ENCODE measurements at regions of chr7 and their contacts with region 1.

Region 1: GRCh38 chr7:26090927-26091519 is 61.0 kb upstream of the NFE2L3 start:
- DNase-seq: no peak
- H3K4me3 ChIP-seq: peak overlapping the region in 1 of 8 donors; percentile 21
- H3K27ac ChIP-seq: no peak overlapping the region
- H3K4me1 ChIP-seq: peaks cover 0 to 16% (median 8%) of the 10 kb centered on the region in 6 donors
- H3K27me3 ChIP-seq: no peaks in the 10 kb centered on the region
- CTCF ChIP-seq: peak; percentile 43 to 71 (median 61)
- POLR2A ChIP-seq: no peak

Region 2: GRCh38 chr7:26200444-26201246 is 109.6 kb after region 1 on chr7 and contains the start of gene HNRNPA2B1:
- intact Hi-C with region 1: loop called (anchors 10 kb)
- DNase-seq: peak; percentile 99
- H3K4me3 ChIP-seq: peak within 1 kb of the TSS; percentile 51 to 93 (median 89)
- H3K27ac ChIP-seq: peak within 1 kb of the TSS; percentile 99 to 100 (median 100)
- H3K4me1 ChIP-seq: peaks cover 43 to 69% (median 56%) of the 10 kb centered on the region in 6 donors
- H3K27me3 ChIP-seq: no peaks in the 10 kb centered on the region
- CTCF ChIP-seq: peak in 7 of 11 experiments; percentile 7 to 56 (median 51)
- POLR2A ChIP-seq: peak; percentile 100
- total RNA-seq, gene HNRNPA2B1: 267 to 549 (median 418) TPM

Region 3: GRCh38 chr7:26675143-26675887 is 584.3 kb after region 1 on chr7:
- intact Hi-C with region 1: loop called (anchors 10 kb)
- DNase-seq: no peak
- H3K4me3 ChIP-seq: no peak overlapping the region
- H3K27ac ChIP-seq: no peak overlapping the region
- H3K4me1 ChIP-seq: peaks cover 0 to 30% (median 0%) of the 10 kb centered on the region in 6 donors
- H3K27me3 ChIP-seq: no peaks in the 10 kb centered on the region
- CTCF ChIP-seq: no peak
- POLR2A ChIP-seq: no peak

Measured in spleen (tissue), 13 donors.